ENCODE measurements at regions of chr7 and their contacts with region 1.

Region 1: GRCh38 chr7:135147899-135148721 is at the start of gene TMEM140:
- DNase-seq: peak; percentile 29 to 85 (median 72)
- H3K4me3 ChIP-seq: peak within 1 kb of the TSS; percentile 52
- H3K4me3 Mint-ChIP-seq: peak within 1 kb of the TSS; percentile 89 to 96 (median 92)
- H3K27ac ChIP-seq: peak within 1 kb of the TSS; percentile 80
- H3K27ac Mint-ChIP-seq: peak within 1 kb of the TSS; percentile 94 to 98 (median 97)
- H3K4me1 ChIP-seq: peaks cover 46% of the 10 kb centered on the region
- H3K4me1 Mint-ChIP-seq: peaks cover 69 to 80% (median 80%) of the 10 kb centered on the region in 3 donors
- H3K27me3 ChIP-seq: no peaks in the 10 kb centered on the region
- H3K27me3 Mint-ChIP-seq: peaks cover 0 to 1% of the 10 kb centered on the region in 2 donors
- total RNA-seq, gene TMEM140: 6.6 to 7.0 TPM

Region 2: DNA sequence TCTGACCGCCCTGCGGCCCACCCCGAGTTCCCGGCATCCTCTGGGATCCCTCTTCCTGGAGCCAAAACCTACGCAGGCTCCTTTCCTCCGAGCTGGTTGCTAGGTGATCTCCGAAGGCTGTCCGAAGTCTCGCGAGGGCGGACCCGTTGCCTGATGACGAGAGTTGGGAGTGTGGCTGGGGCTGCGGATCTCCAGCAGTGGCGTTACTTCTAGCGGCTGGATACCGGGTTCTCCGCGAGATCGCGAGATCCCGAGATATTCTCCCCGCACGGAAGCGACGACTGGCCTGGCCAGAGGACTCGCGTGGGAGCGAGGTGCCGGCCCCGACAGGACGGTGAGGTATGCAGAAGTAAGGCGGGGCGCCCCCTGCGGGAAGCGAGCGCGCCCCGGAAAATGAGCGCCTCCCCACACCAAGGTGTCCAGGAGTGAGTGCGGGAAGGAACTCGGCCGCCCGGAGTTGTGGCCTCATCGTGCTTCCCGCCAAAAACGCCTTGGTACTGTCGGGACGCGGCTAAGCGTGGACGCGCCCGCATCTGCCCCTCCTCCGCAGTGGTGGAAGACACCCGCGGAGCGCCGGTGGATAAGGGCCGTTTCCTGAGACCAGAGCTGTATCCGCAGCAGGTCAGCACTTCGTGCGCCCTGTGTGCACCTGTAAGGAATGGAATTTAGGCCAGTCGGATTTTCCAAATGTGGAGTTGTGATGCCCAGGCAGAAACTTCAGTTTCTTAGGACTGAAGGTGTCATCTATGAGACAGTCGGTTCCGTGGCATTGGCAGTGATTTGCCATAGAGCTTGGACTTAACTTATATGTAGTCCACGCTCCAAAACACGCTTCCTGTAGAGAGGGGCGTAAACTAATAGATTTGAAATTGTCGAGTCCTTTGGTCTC is 161.5 kb before region 1 on chr7 and contains the start of gene AGBL3:
- CTCF ChIA-PET with region 1: interaction called, 59 read pairs
- POLR2A ChIA-PET with region 1: interaction called, 33 read pairs
- DNase-seq: peak; percentile 77 to 95 (median 88)
- H3K4me3 ChIP-seq: peak within 1 kb of the TSS; percentile 98
- H3K4me3 Mint-ChIP-seq: peak within 1 kb of the TSS; percentile 94 to 99 (median 97)
- H3K27ac ChIP-seq: peak within 1 kb of the TSS; percentile 88
- H3K27ac Mint-ChIP-seq: peak within 1 kb of the TSS; percentile 92 to 100 (median 99)
- H3K4me1 ChIP-seq: peaks cover 17% of the 10 kb centered on the region
- H3K4me1 Mint-ChIP-seq: peaks cover 36 to 62% (median 57%) of the 10 kb centered on the region in 3 donors
- H3K27me3 ChIP-seq: no peaks in the 10 kb centered on the region
- H3K27me3 Mint-ChIP-seq: peaks cover 0 to 3% of the 10 kb centered on the region in 2 donors
- total RNA-seq, gene AGBL3: 2.5 to 3.2 TPM

Region 3: GRCh38 chr7:135160098-135160857 is 12.2 kb after region 1 on chr7:
- CTCF ChIA-PET with region 1: interaction called, 14 read pairs
- POLR2A ChIA-PET with region 1: interaction called, 11 read pairs
- DNase-seq: no peak
- H3K4me3 ChIP-seq: no peak overlapping the region
- H3K4me3 Mint-ChIP-seq: peak overlapping the region in 5 of 7 donors; percentile 13 to 59 (median 42)
- H3K27ac ChIP-seq: peak overlapping the region; percentile 74
- H3K27ac Mint-ChIP-seq: peak overlapping the region; percentile 13 to 92 (median 76)
- H3K4me1 ChIP-seq: peaks cover 42% of the 10 kb centered on the region
- H3K4me1 Mint-ChIP-seq: peaks cover 57 to 88% (median 79%) of the 10 kb centered on the region in 3 donors
- H3K27me3 ChIP-seq: no peaks in the 10 kb centered on the region
- H3K27me3 Mint-ChIP-seq: no peaks in the 10 kb centered on the region